Dorsolateral prefrontal cortex (tissue), 120 donors: ENCODE measurements at regions of chr16 and their contacts with region 1.

Region 1: DNA sequence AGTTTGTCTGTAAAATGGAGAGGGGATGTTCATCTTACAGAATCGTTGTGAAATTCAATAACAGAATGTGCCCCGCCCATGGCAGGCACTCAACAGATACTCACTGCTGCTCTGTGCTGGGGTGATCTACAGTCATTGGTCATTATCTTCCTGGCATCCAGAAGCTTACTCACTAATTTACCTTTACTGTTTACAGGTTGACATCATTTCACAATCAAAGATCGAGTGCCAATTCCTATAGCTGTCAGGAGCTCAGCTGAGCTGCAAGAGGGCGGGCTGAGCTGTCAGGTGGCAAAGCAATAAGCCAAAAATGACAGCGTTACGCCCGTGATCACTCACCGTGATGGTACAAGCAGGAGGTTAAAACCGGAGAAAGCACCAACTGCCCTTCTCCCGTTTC is 51.2 kb downstream of the LITAF start:
- DNase-seq: no peak
- H3K4me3 ChIP-seq: no peak overlapping the region
- H3K27ac ChIP-seq: no peak overlapping the region
- H3K27me3 ChIP-seq: no peaks in the 10 kb centered on the region
- CTCF ChIP-seq: no peak

Region 2: GRCh38 chr16:11572301-11572995 is 37.0 kb after region 1 on chr16:
- intact Hi-C with region 1: no loop called
- DNase-seq: no peak
- H3K4me3 ChIP-seq: peak overlapping the region in 2 of 59 donors; percentile 16 to 26
- H3K27ac ChIP-seq: peak overlapping the region in 31 of 59 donors; percentile 4 to 78 (median 45)
- H3K27me3 ChIP-seq: no peaks in the 10 kb centered on the region
- CTCF ChIP-seq: no peak

Region 3: DNA sequence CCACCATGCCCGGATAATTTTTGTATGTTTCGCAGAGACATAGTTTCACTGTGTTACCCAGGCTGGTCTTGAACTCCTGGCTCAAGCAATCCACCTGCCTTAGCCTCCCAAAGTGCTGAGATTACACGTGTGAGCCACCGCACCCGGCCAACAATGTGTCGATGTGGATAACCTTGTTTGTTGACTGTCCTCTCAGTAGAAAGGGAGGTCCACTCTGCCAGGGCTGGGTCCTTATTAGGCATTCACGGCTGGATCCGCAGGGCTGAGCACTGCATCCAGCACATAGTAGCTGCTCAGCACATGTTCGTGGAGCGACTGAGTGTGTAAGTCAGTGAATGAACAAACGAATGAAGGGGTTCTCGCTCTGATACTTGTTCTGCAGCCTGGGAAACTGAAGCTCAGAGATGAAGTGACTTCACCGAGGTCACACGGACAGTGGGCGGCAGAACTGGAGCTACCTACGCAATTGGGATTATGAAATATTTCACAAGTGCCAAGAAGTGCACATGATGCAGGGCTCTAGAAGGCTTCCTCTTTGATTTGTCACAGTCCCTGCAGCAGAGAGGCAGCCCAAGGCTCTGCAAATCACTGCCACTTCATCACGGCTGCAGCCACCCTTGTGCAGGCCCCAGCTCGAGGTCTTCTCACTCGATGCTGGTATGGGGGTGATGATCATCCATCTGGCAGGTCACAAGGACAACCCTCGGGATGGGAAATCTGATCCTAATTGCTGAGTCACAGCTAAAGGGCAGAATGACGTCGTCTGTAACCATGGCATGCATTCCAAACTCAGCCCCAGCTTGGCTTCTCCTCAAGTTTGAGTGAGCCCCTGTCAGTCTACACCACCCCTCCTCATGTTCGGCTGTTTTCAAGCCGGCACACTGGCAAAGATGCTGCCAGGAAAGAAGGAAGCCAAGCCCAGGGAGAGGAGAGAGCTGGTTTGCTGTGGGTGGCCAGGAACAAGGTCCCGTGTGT is 104.7 kb after region 1 on chr16:
- intact Hi-C with region 1: loop called (anchors 1 to 5 kb)
- DNase-seq: peak in 9 of 10 donors; percentile 23 to 77 (median 55)
- H3K4me3 ChIP-seq: peak overlapping the region in 1 of 59 donors; percentile 1
- H3K27ac ChIP-seq: peak overlapping the region in 58 of 59 donors; percentile 24 to 91 (median 84)
- H3K27me3 ChIP-seq: no peaks in the 10 kb centered on the region
- CTCF ChIP-seq: peak in 1 of 56 donors; percentile 19

Region 4: DNA sequence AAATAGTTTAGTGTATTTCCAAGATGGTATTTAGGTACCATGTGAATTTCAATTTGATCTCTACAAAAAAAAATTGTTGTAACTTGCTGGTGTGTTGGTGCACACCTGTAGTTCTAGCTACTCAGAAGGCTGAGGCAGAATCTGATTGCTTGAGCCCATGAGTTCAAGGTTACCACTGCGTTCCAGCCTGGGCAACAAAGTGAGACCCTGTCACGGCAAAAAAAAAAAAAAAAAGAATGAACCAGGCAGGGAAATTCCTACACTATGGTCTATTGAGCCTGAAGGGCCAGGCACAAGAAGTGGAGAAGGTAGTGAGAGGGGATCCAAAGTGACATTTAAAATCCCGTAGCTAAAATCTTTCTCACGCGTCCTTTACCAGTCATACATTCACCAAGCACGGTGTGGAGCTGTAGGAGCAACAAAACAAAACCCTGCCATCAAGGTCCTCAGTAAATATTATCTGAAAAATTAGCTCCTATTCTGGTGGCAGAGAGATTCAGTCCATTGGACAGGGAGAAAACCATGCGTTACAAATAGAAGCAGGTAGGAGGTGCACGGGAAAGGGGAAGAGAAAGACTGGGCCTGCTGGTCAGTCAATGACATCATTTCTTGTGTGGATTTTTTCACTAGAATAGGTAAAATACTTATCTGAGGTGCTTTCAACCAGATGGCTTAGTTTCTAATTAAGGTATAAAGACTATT is 179.9 kb after region 1 on chr16:
- intact Hi-C with region 1: loop called in 1 of 2 experiments (anchors 2 kb)
- DNase-seq: no peak
- H3K4me3 ChIP-seq: no peak overlapping the region
- H3K27ac ChIP-seq: peak overlapping the region in 3 of 59 donors; percentile 11 to 66 (median 22)
- H3K27me3 ChIP-seq: no peaks in the 10 kb centered on the region
- CTCF ChIP-seq: no peak